ENCODE measurements at regions of chr2 and their contacts with region 1.

Region 1: DNA sequence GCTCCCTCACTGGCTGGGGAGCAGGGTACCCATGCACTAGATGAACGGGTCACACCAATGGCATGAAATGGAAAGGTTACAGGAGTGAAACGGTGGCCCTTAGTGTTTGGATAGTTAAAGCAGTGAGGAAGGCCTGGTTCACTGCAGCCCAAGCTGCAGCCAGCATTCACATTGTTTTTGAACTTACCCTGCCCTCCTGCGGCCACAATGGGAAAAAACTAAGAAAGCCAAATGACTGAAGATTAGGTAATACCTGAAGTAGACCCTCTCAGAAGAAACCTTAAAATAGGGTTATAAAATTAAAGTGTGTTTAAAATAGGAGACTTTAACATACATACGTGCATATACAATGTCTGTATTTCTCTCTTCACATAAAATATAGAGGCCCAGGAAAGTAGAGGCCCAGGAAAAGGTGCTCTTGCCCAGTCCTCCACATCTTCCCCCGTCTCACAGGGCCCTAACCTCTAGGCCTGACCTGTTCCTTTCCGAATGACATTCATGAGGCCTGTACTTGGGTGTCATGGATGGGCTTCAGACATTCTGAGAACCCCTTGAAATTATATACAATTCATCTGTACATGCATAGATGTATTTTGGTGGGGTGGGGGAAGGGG is 33.3 kb downstream of the DOK1 start:
- DNase-seq: peak; percentile 79
- ATAC-seq: peak; percentile 68
- H3K4me3 Mint-ChIP-seq: no peak overlapping the region
- H3K27ac Mint-ChIP-seq: peak overlapping the region; percentile 26
- H3K4me1 Mint-ChIP-seq: peaks cover 37% of the 10 kb centered on the region
- H3K27me3 Mint-ChIP-seq: peaks cover 27% of the 10 kb centered on the region

Region 2: GRCh38 chr2:74250189-74250631 is 337.6 kb before region 1 on chr2:
- CTCF ChIA-PET with region 1: interaction called, 13 read pairs
- DNase-seq: peak; percentile 66
- ATAC-seq: peak; percentile 84
- H3K4me3 Mint-ChIP-seq: no peak overlapping the region
- H3K27ac Mint-ChIP-seq: no peak overlapping the region
- H3K4me1 Mint-ChIP-seq: peaks cover 5% of the 10 kb centered on the region
- H3K27me3 Mint-ChIP-seq: no peaks in the 10 kb centered on the region

Region 3: DNA sequence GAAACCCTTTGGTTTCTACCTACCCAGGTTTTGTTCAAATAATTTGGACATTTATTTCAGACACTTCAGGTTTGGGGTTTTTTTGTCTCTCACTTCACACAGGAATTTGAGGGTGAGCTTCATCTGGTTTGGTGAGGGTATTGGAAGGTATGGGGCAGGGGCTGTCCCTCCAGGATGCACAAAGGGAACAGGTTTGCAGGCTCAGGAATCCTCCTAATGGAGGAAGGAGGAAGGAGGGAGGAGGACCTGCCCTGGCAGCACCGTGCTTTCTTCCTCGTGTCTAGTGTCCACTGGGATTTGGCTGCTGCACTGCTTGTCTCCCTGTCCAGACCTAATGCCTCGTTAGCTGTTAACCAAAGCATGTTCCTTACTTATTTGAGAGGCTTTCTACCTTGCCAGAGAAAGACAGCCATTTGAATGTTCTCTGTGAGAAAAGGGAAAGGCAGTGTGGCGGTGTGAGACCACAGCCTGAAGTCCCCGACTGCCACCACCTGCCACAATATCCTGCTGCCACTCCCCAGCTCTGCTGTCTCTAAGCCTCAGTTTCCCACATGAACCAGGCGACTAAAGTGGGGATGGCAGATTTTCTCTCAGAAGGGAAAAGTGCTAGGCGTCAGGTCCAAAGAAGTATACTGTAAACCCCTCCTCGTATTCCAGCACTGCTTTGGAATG is 242.4 kb before region 1 on chr2:
- CTCF ChIA-PET with region 1: no interaction called
- DNase-seq: peak; percentile 50
- ATAC-seq: no peak
- H3K4me3 Mint-ChIP-seq: no peak overlapping the region
- H3K27ac Mint-ChIP-seq: no peak overlapping the region
- H3K4me1 Mint-ChIP-seq: peaks cover 16% of the 10 kb centered on the region
- H3K27me3 Mint-ChIP-seq: peaks cover 10% of the 10 kb centered on the region

Region 4: GRCh38 chr2:74482801-74483674 is 104.7 kb before region 1 on chr2 and contains the starts of genes CCDC142 and TTC31:
- CTCF ChIA-PET with region 1: interaction called, 79 read pairs
- DNase-seq: peak; percentile 97
- ATAC-seq: peak; percentile 95
- H3K4me3 Mint-ChIP-seq: peak within 1 kb of the TSS; percentile 97
- H3K27ac Mint-ChIP-seq: peak within 1 kb of the TSS; percentile 100
- H3K4me1 Mint-ChIP-seq: peaks cover 44% of the 10 kb centered on the region
- H3K27me3 Mint-ChIP-seq: no peaks in the 10 kb centered on the region
- total RNA-seq, gene CCDC142: 26.5 to 29.5 TPM
- total RNA-seq, gene TTC31: 39.4 to 48.8 TPM

Region 5: GRCh38 chr2:74529357-74530238 is 58.2 kb before region 1 on chr2 and contains the starts of genes AUP1 and HTRA2:
- CTCF ChIA-PET with region 1: interaction called, 98 read pairs
- DNase-seq: peak; percentile 98
- ATAC-seq: peak; percentile 90
- H3K4me3 Mint-ChIP-seq: peak within 1 kb of the TSS; percentile 100
- H3K27ac Mint-ChIP-seq: peak within 1 kb of the TSS; percentile 97
- H3K4me1 Mint-ChIP-seq: peaks cover 46% of the 10 kb centered on the region
- H3K27me3 Mint-ChIP-seq: no peaks in the 10 kb centered on the region
- total RNA-seq, gene AUP1: 140 to 158 TPM
- total RNA-seq, gene HTRA2: 52.2 to 87.2 TPM

Region 6: DNA sequence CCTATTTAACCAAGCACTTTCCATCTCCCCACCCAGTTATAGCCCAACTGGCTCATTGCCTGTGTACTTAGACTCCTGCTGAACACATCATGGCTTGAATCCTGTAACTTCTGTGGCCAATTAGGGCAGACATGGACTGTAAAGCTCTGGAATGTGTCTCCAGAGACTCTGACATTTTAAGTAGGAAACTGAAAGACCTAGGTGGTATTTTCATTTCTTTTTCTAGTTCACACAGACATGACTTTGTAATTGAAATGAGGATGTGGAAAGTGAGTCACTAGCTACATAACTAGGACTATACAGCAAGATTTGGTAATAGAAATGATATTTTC is 21.1 kb before region 1 on chr2:
- CTCF ChIA-PET with region 1: interaction called, 28 read pairs
- DNase-seq: no peak
- ATAC-seq: no peak
- H3K4me3 Mint-ChIP-seq: no peak overlapping the region
- H3K27ac Mint-ChIP-seq: peak overlapping the region; percentile 75
- H3K4me1 Mint-ChIP-seq: peaks cover 38% of the 10 kb centered on the region
- H3K27me3 Mint-ChIP-seq: peaks cover 10% of the 10 kb centered on the region

Region 7: DNA sequence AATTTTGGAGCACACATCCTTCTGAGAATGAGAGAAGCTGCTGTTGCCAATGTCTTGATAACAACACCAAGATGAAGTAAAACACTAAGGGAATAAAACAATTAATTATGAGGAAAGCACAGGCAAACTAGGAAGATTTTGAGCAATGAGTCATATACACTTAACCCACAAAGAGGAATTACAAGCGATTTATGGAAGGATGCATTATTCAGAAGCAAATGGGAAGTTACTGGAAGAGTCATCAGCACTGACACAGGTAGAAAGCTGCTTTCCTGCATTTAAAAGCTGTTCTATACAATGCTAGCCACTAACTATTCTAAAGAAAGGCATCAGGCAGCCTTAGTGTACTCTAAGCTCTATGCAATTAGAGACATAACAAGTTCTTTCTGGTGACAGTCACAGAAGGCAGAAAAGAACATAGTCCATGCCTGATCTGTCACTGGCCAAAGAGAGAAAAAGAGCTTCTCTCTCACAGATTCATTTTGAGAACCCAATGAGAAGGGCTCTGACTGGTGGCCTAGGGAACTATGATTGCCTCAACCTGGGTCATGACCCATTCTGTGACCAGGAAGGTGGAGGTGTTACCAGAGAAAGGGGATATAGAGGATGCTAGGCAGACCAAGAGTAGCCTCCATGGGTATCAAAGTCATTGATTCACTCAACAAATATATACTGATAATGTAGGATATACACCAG is 15.0 kb after region 1 on chr2:
- CTCF ChIA-PET with region 1: interaction called, 71 read pairs
- DNase-seq: peak; percentile 48
- ATAC-seq: peak; percentile 74
- H3K4me3 Mint-ChIP-seq: peak overlapping the region; percentile 39
- H3K27ac Mint-ChIP-seq: peak overlapping the region; percentile 81
- H3K4me1 Mint-ChIP-seq: peaks cover 25% of the 10 kb centered on the region
- H3K27me3 Mint-ChIP-seq: peaks cover 26% of the 10 kb centered on the region

Region 8: DNA sequence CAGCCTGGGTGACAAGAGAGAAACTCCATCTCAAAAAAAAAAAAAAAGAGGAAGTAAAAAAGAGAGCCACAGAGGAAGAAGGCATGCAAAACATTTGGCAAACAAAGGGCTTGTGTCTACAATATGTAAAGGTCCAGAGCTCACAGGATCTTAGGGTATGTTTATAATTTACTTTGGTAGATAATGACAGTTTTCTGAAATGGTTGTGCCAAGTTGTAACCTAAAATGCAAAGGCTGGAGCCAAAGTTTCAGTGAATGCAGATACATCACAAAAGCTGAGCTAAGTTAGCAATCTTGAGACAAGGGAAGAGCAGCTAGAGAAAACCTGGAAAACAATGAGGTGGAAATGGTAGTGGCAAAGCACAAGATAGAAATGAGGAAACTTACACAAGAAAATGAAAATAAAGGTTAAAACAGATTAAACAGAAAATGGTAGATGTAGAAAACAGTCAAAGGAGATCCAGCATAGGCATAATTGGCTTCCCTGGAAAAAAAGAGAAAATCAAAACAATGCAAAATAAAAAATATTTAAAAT is 168.7 kb after region 1 on chr2:
- CTCF ChIA-PET with region 1: no interaction called
- DNase-seq: no peak
- ATAC-seq: no peak
- H3K4me3 Mint-ChIP-seq: no peak overlapping the region
- H3K27ac Mint-ChIP-seq: no peak overlapping the region
- H3K4me1 Mint-ChIP-seq: no peaks in the 10 kb centered on the region
- H3K27me3 Mint-ChIP-seq: peaks cover 15% of the 10 kb centered on the region

Measured in activated CD8-positive, alpha-beta memory T cell treated with anti-CD3 and anti-CD28 coated beads, Interleukin-2, amount 10 ng/mL, durations not matched to agents 7 days and 5 days (primary cell).